ENCODE measurements at regions of chr1 and their contacts with region 1.

Region 1: GRCh38 chr1:178542560-178543356 is 29.8 kb downstream of the TEX35 start:
- DNase-seq: peak; percentile 93

Region 2: GRCh38 chr1:178486100-178487069 is 56.4 kb before region 1 on chr1:
- CTCF ChIA-PET with region 1: no interaction called
- POLR2A ChIA-PET with region 1: no interaction called
- DNase-seq: no peak

Region 3: DNA sequence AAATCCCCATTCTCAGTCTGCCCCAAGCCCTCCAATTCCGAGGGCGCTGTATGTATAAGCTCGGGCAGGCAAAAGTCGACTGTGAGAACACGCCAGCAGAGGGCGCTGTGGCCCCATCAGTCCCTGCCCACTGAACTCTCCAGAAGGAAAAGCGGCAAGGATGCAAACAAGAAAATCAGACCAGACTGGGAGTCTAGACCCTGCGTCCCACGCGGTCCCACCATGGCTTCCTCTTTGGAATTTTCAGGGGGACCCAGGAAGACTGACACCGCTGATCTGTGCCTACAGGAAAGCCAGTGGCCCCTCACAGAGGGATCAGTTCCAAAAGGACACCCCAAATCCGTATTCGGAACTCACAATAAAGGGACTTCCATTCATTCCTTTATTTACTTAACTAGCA is 10.4 kb before region 1 on chr1:
- CTCF ChIA-PET with region 1: interaction called, 10 read pairs
- POLR2A ChIA-PET with region 1: interaction called, 3 read pairs
- DNase-seq: peak; percentile 93

Region 4: GRCh38 chr1:178752891-178753290 is 210.1 kb after region 1 on chr1:
- CTCF ChIA-PET with region 1: interaction called, 13 read pairs
- POLR2A ChIA-PET with region 1: interaction called, 9 read pairs
- DNase-seq: no peak

Measured in HEK293T (cell line).